Endothelial cell of umbilical vein (primary cell): ENCODE measurements at regions of chr16 and their contacts with region 1.

Region 1: DNA sequence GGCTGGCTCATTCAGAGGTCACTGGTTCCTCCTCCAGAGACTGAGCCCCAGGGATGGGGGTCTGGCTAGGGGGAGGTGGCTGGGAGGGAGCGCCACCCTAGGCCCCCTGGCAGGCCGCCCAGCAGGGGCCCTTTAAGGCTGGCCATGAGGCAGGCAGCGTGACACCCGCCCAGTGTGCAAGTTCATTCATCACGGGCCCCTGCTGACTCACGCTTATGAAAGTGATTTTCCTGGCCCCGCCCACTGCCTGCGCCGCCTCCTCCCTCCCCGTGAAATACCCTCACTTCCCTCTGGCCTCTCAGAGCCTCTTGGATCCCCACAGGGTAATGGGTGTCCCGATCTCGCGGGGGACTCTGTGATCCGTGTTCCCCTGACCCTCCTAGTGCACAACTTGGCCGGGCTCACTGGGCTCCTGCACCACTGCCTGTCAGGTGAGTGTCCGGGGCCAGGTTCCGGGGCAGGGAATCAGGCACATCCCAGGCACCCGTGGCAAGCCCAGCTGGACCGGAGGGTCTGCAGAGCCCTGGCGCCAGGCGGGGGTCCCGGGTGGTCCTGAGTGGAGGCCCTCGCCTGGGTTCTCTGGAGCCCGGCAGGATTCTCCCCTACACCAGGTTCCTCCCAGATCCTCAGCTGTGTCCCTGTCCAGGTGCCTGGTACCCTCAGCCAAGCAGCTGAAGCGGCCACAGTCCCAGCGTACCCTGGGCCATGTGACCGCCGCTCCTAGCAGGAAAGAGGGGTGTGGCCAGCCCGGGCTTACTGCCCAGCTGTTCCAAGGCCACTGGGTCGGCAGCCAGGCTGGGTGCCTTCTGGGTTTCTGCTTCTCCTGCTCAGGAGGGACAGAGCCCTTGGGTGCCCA is at the start of gene OSGIN1:
- DNase-seq: peak; percentile 90
- H3K4me3 ChIP-seq: peak within 1 kb of the TSS; percentile 54 to 78 (median 55)
- H3K27ac ChIP-seq: peak within 1 kb of the TSS; percentile 91
- H3K4me1 ChIP-seq: peaks cover 22% of the 10 kb centered on the region
- H3K27me3 ChIP-seq: no peaks in the 10 kb centered on the region
- CTCF ChIP-seq: no peak
- POLR2A ChIP-seq: peak; percentile 77
- total RNA-seq, gene OSGIN1: 8.6 and 11.0 TPM in 2 replicates

Region 2: DNA sequence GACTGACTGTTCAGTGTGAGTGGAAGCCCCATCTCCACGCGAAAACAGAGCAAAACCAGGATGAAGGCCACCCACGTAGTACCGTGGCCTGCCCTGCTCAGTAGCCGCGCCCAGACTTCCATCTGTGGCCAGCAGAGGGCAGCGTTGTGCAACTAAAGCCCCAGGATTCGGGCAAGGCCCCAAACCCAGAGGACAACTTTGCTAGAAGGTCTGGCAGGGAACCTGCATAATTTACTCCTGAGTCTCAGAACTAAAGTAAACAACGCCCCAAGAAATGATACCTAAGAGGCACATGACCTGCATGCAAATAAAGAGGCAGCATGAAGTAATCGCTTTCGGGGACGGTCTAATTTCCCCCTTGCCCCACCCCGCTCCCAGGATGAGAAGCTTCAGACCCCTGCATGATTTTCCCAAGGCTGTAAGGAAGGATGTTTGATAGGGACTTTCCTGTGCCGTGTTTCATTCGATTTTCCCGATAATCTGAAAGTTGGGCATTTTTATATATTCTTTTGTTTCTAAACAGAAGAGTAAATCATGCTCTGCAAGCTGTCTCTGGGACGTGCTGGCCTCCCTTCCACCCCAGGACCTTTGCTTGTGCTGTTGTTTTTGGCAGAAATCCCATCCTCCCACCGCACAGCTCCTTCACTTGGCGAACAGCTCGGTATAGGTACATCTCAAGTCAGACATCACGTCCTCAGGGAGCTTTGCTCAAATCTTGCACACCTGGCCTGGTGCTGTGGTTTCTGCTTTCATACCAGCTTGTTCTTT is 126.8 kb before region 1 on chr16:
- CTCF ChIA-PET with region 1: interaction called, 4 read pairs
- POLR2A ChIA-PET with region 1: no interaction called
- dilution Hi-C with region 1: no loop called
- intact Hi-C with region 1: loop called (anchors 1 kb)
- DNase-seq: peak; percentile 65
- H3K4me3 ChIP-seq: no peak overlapping the region
- H3K27ac ChIP-seq: no peak overlapping the region
- H3K4me1 ChIP-seq: no peaks in the 10 kb centered on the region
- H3K27me3 ChIP-seq: peaks cover under 1 to 11% of the 10 kb centered on the region in 2 experiments
- CTCF ChIP-seq: peak; percentile 89 to 91
- POLR2A ChIP-seq: no peak

Region 3: DNA sequence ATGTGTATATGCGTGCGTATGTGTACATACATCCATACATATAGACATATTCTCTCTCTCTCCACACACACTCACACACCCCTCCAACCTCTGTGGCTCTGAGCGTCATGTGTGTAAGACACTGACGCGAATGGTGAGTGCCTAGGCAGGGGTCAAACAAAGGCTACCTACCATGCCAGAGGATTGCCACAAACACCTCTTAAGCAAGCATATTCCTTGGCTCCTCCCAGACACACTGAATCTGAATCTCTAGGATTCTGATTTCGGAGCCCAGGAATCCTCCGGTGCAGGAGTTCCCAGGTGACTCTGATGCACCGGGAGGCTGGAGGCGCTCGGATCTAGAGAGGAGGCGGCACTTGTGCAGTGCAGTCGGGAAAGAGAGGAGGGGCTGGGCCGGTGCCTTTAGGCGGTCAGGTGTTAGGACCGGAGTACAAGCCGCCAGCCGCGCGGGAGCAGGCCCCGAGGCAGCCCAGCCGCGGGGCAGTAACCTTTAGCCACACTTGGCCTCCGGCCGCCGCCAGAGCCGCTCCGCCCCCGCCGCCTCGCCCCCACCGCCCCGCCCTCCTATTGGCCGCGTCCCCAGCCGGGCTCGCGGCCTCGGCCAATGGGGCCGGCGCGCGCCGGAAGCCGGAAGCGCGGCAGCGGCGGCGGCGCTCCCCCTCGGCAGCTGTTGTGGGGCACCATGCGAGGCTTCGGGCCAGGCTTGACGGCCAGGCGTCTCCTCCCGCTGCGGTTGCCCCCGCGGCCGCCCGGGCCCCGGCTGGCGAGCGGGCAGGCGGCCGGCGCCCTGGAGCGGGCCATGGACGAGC is 54.5 kb before region 1 on chr16 and contains the start of gene MLYCD:
- CTCF ChIA-PET with region 1: no interaction called
- POLR2A ChIA-PET with region 1: interaction called, 3 read pairs
- dilution Hi-C with region 1: no loop called
- intact Hi-C with region 1: loop called (anchors 1 kb)
- DNase-seq: peak; percentile 68
- H3K4me3 ChIP-seq: peak within 1 kb of the TSS; percentile 9 to 55 (median 45)
- H3K27ac ChIP-seq: peak within 1 kb of the TSS; percentile 60
- H3K4me1 ChIP-seq: peaks cover 10% of the 10 kb centered on the region
- H3K27me3 ChIP-seq: no peaks in the 10 kb centered on the region
- CTCF ChIP-seq: no peak
- POLR2A ChIP-seq: peak; percentile 52
- total RNA-seq, gene MLYCD: 2.8 and 3.4 TPM in 2 replicates

Region 4: GRCh38 chr16:84044118-84044488 is 90.9 kb after region 1 on chr16:
- CTCF ChIA-PET with region 1: interaction called, 8 read pairs
- POLR2A ChIA-PET with region 1: no interaction called
- dilution Hi-C with region 1: no loop called
- intact Hi-C with region 1: loop called (anchors 5 kb)
- DNase-seq: peak; percentile 20
- H3K4me3 ChIP-seq: no peak overlapping the region
- H3K27ac ChIP-seq: no peak overlapping the region
- H3K4me1 ChIP-seq: no peaks in the 10 kb centered on the region
- H3K27me3 ChIP-seq: peaks cover 0 to 4% of the 10 kb centered on the region in 2 experiments
- CTCF ChIP-seq: peak; percentile 12 to 23
- POLR2A ChIP-seq: no peak

Region 5: GRCh38 chr16:84072014-84072413 is 118.8 kb after region 1 on chr16:
- CTCF ChIA-PET with region 1: interaction called, 25 read pairs
- POLR2A ChIA-PET with region 1: no interaction called
- dilution Hi-C with region 1: no loop called
- intact Hi-C with region 1: no loop called
- DNase-seq: peak; percentile 74
- H3K4me3 ChIP-seq: no peak overlapping the region
- H3K27ac ChIP-seq: peak overlapping the region; percentile 6
- H3K4me1 ChIP-seq: peaks cover 20% of the 10 kb centered on the region
- H3K27me3 ChIP-seq: no peaks in the 10 kb centered on the region
- CTCF ChIP-seq: no peak
- POLR2A ChIP-seq: peak; percentile 71

Region 6: DNA sequence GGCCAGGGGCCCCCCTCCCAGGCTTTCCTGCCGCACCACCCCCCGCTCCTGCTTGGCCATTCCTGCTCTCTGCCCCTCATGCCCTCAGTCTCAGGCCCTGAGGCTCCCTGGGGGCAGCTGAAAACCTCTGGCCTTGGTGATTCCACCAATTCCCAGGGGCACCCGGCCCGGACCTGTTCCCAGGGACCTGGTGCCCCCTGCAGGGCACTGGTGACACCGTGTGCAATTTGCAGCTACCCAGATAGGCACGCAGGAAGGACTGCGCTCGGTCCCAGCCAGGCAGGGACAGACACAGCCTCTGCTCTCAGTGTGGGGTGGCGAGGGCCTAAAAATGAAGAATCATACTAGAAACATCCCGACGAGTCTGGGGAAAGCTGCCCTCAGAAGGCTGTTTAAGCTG is 355.0 kb after region 1 on chr16:
- CTCF ChIA-PET with region 1: interaction called, 7 read pairs
- POLR2A ChIA-PET with region 1: no interaction called
- dilution Hi-C with region 1: no loop called
- intact Hi-C with region 1: loop called (anchors 10 kb)
- DNase-seq: peak; percentile 15
- H3K4me3 ChIP-seq: no peak overlapping the region
- H3K27ac ChIP-seq: no peak overlapping the region
- H3K4me1 ChIP-seq: no peaks in the 10 kb centered on the region
- H3K27me3 ChIP-seq: peaks cover 14 to 23% of the 10 kb centered on the region in 2 experiments
- CTCF ChIP-seq: peak; percentile 32 to 58
- POLR2A ChIP-seq: no peak

Region 7: DNA sequence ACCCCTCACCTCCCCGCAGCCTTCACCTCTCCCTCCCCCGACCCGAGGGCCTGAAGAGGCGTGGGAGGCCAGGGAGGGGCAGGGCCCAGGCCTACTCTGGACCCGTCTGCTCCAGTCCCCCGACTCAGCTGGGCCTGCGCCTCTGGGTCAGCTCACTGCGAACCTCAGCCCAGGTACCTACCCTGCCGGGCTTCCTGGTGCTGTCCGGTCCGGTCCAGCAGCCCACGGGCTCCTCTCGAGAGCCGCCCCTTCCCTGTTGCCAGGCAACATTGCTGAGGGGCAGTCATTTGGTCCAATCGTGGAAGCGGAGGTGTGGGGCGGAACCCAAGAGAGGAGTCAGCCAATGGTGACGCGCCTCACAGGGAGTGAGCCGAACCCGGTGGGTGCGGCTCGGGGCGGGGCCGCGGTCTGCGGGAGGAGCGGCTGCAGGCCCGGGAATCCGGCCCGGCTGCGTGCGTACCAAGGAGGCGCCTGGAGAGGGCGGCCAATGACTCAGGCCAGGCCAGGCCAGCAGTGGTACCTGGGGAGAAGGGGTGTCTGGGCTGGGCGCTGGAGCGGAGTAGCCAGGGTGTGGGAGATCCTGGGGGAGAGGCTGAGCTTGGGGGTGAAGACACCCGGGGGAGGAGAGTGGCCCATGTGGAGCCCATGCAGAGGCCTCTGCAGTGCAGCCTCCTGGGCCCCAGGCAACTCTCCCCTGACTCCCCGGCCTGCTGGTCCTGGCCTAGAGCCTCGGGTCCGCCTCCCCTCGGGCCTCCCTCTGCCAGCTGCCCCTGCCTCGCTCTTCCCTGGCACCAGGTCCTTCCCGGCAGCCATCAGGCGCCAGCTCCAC is 551.5 kb after region 1 on chr16 and contains the start of gene MEAK7:
- CTCF ChIA-PET with region 1: interaction called, 7 read pairs
- POLR2A ChIA-PET with region 1: no interaction called
- dilution Hi-C with region 1: no loop called
- intact Hi-C with region 1: loop called (anchors 2 kb)
- DNase-seq: peak; percentile 98
- H3K4me3 ChIP-seq: peak within 1 kb of the TSS; percentile 61 to 81 (median 62)
- H3K27ac ChIP-seq: peak within 1 kb of the TSS; percentile 38
- H3K4me1 ChIP-seq: peaks cover 10% of the 10 kb centered on the region
- H3K27me3 ChIP-seq: no peaks in the 10 kb centered on the region
- CTCF ChIP-seq: no peak
- POLR2A ChIP-seq: no peak
- total RNA-seq, gene MEAK7: 19.3 and 22.7 TPM in 2 replicates